Mammary epithelial cell (primary cell): ENCODE measurements at regions of chr1 and their contacts with region 1.

Region 1: GRCh38 chr1:230797942-230798418 is 50.8 kb downstream of the CAPN9 start:
- DNase-seq: peak; percentile 33
- H3K4me3 ChIP-seq: no peak overlapping the region
- H3K27ac ChIP-seq: no peak overlapping the region
- H3K4me1 ChIP-seq: no peaks in the 10 kb centered on the region
- H3K27me3 ChIP-seq: no peaks in the 10 kb centered on the region
- CTCF ChIP-seq: peak; percentile 54 to 80

Region 2: DNA sequence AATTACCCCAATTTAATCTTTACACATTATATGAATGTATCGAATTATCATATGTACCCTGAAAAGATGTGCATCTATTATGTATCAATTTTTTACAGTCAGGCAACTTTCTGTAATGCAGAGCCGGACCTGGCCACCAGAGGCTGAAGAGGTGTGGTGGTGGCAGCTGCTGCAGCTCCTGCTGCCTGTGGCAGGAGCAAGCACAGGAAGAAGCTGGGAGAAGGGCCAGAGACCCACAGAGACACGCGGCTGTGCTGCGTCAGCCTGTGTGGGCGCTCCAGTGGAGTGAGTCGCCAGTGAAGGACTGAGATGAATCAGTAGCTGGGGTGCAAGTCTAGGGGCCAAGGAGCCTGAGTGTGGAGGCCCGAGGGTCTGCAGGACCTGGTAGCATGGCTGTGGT is 230.0 kb before region 1 on chr1:
- CTCF ChIA-PET with region 1: no interaction called
- dilution Hi-C with region 1: no loop called
- in situ Hi-C with region 1: no loop called
- intact Hi-C with region 1: no loop called
- DNase-seq: peak; percentile 11
- H3K4me3 ChIP-seq: no peak overlapping the region
- H3K27ac ChIP-seq: peak overlapping the region; percentile 20
- H3K4me1 ChIP-seq: peaks cover 3% of the 10 kb centered on the region
- H3K27me3 ChIP-seq: peaks cover 9% of the 10 kb centered on the region
- CTCF ChIP-seq: peak; percentile 13 to 35

Region 3: GRCh38 chr1:230708631-230709580 is 89.1 kb before region 1 on chr1:
- CTCF ChIA-PET with region 1: no interaction called
- dilution Hi-C with region 1: no loop called
- in situ Hi-C with region 1: no loop called
- intact Hi-C with region 1: no loop called
- DNase-seq: no peak
- H3K4me3 ChIP-seq: no peak overlapping the region
- H3K27ac ChIP-seq: no peak overlapping the region
- H3K4me1 ChIP-seq: no peaks in the 10 kb centered on the region
- H3K27me3 ChIP-seq: no peaks in the 10 kb centered on the region
- CTCF ChIP-seq: no peak

Region 4: GRCh38 chr1:230878591-230878990 is 80.6 kb after region 1 on chr1:
- CTCF ChIA-PET with region 1: no interaction called
- dilution Hi-C with region 1: no loop called
- in situ Hi-C with region 1: no loop called
- intact Hi-C with region 1: no loop called
- DNase-seq: no peak
- H3K4me3 ChIP-seq: no peak overlapping the region
- H3K27ac ChIP-seq: no peak overlapping the region
- H3K4me1 ChIP-seq: no peaks in the 10 kb centered on the region
- H3K27me3 ChIP-seq: peaks cover 5% of the 10 kb centered on the region
- CTCF ChIP-seq: no peak

Region 5: DNA sequence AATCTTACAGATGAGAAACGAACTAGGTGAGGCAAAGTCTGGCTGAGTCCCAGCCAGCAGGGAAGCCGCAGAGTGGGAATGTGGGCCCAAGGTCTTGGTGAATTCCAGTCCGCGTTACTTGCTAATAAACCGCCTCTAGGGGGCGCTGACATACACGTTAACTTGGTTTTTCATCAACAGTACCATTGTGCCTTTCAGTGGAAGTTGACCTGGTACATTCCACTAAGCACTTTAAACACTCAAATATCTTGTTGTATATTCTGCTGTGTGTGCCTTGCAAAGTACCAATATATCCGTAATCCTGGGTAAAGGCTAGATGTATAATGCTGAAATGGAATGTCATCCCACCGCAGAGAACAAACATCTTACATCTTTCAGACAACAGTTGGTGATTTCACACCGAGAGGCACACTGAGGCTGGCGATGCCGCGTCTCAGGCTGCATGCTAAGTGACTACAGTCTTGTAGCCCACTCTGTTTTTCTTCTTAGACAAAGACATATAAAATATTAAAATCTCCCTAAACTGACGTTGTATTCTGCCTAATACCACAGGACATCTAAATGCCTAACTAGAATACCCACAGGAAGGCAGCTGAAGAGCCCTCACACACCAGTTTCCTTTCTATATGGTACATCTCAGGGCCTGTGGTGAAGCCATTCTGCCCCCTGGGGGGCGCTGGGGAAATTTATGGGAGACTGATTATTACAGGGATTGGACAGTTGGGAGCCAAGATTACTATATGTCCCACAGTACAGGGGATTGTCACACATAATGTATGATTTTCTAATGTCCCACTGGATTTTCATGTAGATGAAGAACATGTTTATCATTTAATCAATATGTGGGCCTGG is 119.5 kb after region 1 on chr1:
- CTCF ChIA-PET with region 1: no interaction called
- dilution Hi-C with region 1: no loop called
- in situ Hi-C with region 1: no loop called
- intact Hi-C with region 1: loop called (anchors 1 kb)
- DNase-seq: peak; percentile 44
- H3K4me3 ChIP-seq: no peak overlapping the region
- H3K27ac ChIP-seq: no peak overlapping the region
- H3K4me1 ChIP-seq: no peaks in the 10 kb centered on the region
- H3K27me3 ChIP-seq: no peaks in the 10 kb centered on the region
- CTCF ChIP-seq: peak; percentile 73 to 81

Region 6: DNA sequence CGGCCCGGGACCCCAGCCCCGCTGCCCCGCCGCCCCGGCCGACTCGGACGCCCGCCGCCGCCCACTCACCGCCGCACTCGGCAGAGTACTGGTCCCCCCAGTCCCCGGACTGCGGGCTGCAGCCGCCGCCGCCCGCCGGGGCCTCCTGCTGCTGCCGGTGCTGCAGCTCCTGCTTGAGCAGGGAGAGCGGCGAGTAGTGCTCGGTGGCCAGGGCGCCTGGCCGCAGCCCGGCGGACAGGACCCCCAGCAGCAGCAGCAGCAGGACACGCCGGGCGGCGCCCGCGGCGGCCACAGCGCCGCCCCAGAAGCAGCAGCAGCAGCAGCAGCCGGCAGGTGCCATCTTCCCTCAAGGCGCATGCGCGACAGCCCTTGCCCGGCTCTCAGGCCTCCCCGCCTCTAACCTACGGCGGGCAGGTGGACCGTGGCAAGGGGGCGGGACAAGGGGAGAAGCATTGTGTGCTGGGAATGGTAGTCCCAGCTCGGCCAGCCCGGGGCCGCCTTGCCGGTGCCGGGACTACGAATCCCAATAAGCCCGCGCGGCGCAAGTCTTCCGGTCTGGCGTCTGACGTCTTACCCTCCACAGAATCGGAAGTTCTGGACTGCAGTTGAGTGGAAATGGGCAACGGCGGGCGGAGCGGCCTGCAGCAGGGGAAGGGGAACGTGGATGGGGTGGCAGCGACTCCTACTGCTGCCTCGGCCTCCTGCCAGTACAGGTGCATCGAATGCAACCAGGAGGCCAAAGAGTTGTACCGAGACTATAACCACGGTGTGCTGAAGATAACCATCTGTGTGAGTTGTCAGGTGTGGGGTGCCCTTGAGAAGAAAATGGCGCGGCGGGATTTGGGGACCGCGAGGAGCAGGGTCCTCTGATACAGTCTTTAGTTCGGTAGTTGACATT is 180.8 kb after region 1 on chr1 and contains the starts of genes ARV1 and TTC13:
- CTCF ChIA-PET with region 1: no interaction called
- dilution Hi-C with region 1: no loop called
- in situ Hi-C with region 1: no loop called
- intact Hi-C with region 1: loop called (anchors 1 kb)
- DNase-seq: peak; percentile 99
- H3K4me3 ChIP-seq: peak within 1 kb of the TSS; percentile 70 to 84 (median 84)
- H3K27ac ChIP-seq: peak within 1 kb of the TSS; percentile 39
- H3K4me1 ChIP-seq: peaks cover 6% of the 10 kb centered on the region
- H3K27me3 ChIP-seq: no peaks in the 10 kb centered on the region
- CTCF ChIP-seq: peak; percentile 26 to 47
- total RNA-seq, gene ARV1: 14.5 to 22.4 TPM
- total RNA-seq, gene TTC13: 11.9 to 12.5 TPM

Region 7: GRCh38 chr1:231091831-231092301 is 293.9 kb after region 1 on chr1:
- CTCF ChIA-PET with region 1: no interaction called
- dilution Hi-C with region 1: no loop called
- in situ Hi-C with region 1: no loop called
- intact Hi-C with region 1: loop called (anchors 5 kb)
- DNase-seq: peak; percentile 6
- H3K4me3 ChIP-seq: no peak overlapping the region
- H3K27ac ChIP-seq: no peak overlapping the region
- H3K4me1 ChIP-seq: no peaks in the 10 kb centered on the region
- H3K27me3 ChIP-seq: peaks cover 2% of the 10 kb centered on the region
- CTCF ChIP-seq: peak; percentile 60 to 72

Region 8: DNA sequence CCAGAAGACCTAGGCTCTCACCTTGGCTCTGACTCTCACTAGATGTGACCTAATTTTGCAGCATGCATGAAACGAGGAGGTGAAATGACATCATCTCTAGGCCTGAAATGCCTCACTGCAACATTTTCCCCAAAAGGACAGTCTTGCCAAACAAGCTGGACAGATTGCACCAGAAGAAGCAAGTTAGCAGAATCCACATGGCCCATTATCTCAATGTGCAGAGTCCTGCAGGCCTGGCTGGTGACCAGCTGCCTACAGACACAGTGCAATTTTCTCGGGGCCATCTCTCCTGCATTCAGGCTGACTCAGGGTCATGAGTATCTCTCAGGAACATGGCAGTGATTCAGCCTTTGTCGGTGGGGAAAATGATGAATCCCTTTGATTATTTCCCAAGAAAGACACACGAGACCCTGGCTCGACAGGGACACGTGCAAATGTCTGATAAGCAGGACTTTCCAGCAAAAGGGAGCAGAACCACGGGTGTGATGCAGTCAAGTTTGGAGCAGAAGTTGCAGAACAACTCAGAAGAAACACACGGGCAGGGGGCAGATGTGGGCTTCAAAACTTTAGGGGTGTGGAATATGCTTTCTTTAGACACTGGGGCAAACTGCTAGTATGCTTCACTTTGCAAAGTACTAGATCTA is 402.5 kb after region 1 on chr1:
- CTCF ChIA-PET with region 1: no interaction called
- dilution Hi-C with region 1: no loop called
- in situ Hi-C with region 1: loop called (anchors 10 to 25 kb)
- intact Hi-C with region 1: no loop called
- DNase-seq: peak; percentile 16
- H3K4me3 ChIP-seq: no peak overlapping the region
- H3K27ac ChIP-seq: no peak overlapping the region
- H3K4me1 ChIP-seq: no peaks in the 10 kb centered on the region
- H3K27me3 ChIP-seq: peaks cover 5% of the 10 kb centered on the region
- CTCF ChIP-seq: no peak

Region 9: DNA sequence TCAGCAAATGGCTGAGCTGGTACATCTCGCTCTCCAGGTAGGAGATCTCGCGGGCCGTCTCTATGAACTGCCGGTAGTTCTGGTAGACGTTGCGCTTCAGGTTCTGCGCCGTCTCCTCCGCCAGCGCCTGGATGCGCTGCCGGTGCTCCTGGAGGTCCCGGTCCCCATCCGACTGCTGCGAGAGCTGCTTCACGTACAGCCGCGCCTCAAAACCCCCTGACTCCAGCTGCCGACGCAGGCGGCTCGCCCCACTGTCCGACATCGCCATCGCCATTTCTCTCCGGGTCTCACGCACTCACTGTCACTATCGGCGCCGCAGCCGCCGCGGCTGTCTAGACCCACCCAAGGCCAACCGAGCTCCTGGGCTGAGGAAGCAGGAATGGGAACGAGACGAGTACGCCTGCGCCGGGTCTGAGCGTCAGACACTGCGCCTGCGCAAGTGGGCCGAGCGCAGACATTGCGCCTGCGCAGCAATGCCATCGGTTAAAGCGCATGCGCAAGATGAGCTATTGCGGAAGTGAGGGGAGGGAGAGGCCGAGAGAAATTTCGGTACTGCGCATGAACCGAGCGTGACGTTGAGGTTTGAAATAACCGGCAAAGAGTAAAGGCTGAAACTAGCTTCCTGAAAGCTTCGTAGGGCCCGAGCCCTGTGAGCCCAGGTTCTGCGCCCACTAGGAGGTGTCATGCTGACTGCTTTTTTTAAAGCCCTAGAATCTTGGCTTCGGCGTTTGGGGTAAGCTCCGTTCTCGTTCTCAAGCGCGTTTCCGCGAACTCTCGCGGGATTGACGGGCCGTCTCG is 539.7 kb after region 1 on chr1 and contains the start of gene EXOC8:
- CTCF ChIA-PET with region 1: no interaction called
- dilution Hi-C with region 1: no loop called
- in situ Hi-C with region 1: no loop called
- intact Hi-C with region 1: loop called (anchors 10 kb)
- DNase-seq: peak; percentile 97
- H3K4me3 ChIP-seq: peak within 1 kb of the TSS; percentile 62 to 99 (median 88)
- H3K27ac ChIP-seq: peak within 1 kb of the TSS; percentile 97
- H3K4me1 ChIP-seq: peaks cover 28% of the 10 kb centered on the region
- H3K27me3 ChIP-seq: no peaks in the 10 kb centered on the region
- CTCF ChIP-seq: no peak
- total RNA-seq, gene EXOC8: 12.7 to 16.5 TPM

Region 10: GRCh38 chr1:231590453-231591198 is 792.6 kb after region 1 on chr1:
- CTCF ChIA-PET with region 1: no interaction called
- dilution Hi-C with region 1: no loop called
- in situ Hi-C with region 1: no loop called
- intact Hi-C with region 1: loop called (anchors 5 kb)
- DNase-seq: peak; percentile 51
- H3K4me3 ChIP-seq: no peak overlapping the region
- H3K27ac ChIP-seq: no peak overlapping the region
- H3K4me1 ChIP-seq: no peaks in the 10 kb centered on the region
- H3K27me3 ChIP-seq: no peaks in the 10 kb centered on the region
- CTCF ChIP-seq: peak; percentile 71 to 80